Esophagus muscularis mucosa (tissue), 4 donors: ENCODE measurements at regions of chrX and their contacts with region 1.

Region 1: GRCh38 chrX:102599951-102600579 is 750 bp downstream of the ARMCX5 start:
- DNase-seq: no peak
- H3K4me3 ChIP-seq: peak overlapping the region; percentile 60 to 68 (median 63)
- H3K27ac ChIP-seq: peak overlapping the region; percentile 71 to 83 (median 76)
- H3K4me1 ChIP-seq: peaks cover 0 to 5% (median 5%) of the 10 kb centered on the region in 4 donors
- H3K27me3 ChIP-seq: no peaks in the 10 kb centered on the region
- CTCF ChIP-seq: no peak
- EP300 ChIP-seq: no peak
- POLR2A ChIP-seq: no peak

Region 2: GRCh38 chrX:102652031-102652688 is 52.1 kb after region 1 on chrX:
- intact Hi-C with region 1: loop called (anchors 5 kb)
- DNase-seq: no peak
- H3K4me3 ChIP-seq: peak overlapping the region; percentile 66 to 73 (median 68)
- H3K27ac ChIP-seq: peak overlapping the region; percentile 79 to 86 (median 82)
- H3K4me1 ChIP-seq: peaks cover 0 to 17% (median 12%) of the 10 kb centered on the region in 4 donors
- H3K27me3 ChIP-seq: no peaks in the 10 kb centered on the region
- CTCF ChIP-seq: peak; percentile 36 to 65 (median 48)
- EP300 ChIP-seq: no peak
- POLR2A ChIP-seq: no peak

Region 3: GRCh38 chrX:102846544-102847236 is 246.6 kb after region 1 on chrX:
- intact Hi-C with region 1: no loop called
- DNase-seq: no peak
- H3K4me3 ChIP-seq: no peak overlapping the region
- H3K27ac ChIP-seq: no peak overlapping the region
- H3K4me1 ChIP-seq: no peaks in the 10 kb centered on the region
- H3K27me3 ChIP-seq: no peaks in the 10 kb centered on the region
- CTCF ChIP-seq: no peak
- EP300 ChIP-seq: no peak
- POLR2A ChIP-seq: no peak

Region 4: GRCh38 chrX:102934624-102935023 is 334.6 kb after region 1 on chrX:
- intact Hi-C with region 1: no loop called
- DNase-seq: no peak
- H3K4me3 ChIP-seq: no peak overlapping the region
- H3K27ac ChIP-seq: no peak overlapping the region
- H3K4me1 ChIP-seq: no peaks in the 10 kb centered on the region
- H3K27me3 ChIP-seq: no peaks in the 10 kb centered on the region
- CTCF ChIP-seq: peak; percentile 45 to 61 (median 48)
- EP300 ChIP-seq: no peak
- POLR2A ChIP-seq: no peak